ENCODE measurements at regions of chr10 and their contacts with region 1.

Region 1: GRCh38 chr10:63689768-63690167 is 168.6 kb downstream of the REEP3 start:
- DNase-seq: no peak
- H3K4me3 ChIP-seq: no peak overlapping the region
- H3K27ac ChIP-seq: peak overlapping the region; percentile 70
- H3K4me1 ChIP-seq: peaks cover 15% of the 10 kb centered on the region
- H3K27me3 ChIP-seq: no peaks in the 10 kb centered on the region
- CTCF ChIP-seq: no peak

Region 2: DNA sequence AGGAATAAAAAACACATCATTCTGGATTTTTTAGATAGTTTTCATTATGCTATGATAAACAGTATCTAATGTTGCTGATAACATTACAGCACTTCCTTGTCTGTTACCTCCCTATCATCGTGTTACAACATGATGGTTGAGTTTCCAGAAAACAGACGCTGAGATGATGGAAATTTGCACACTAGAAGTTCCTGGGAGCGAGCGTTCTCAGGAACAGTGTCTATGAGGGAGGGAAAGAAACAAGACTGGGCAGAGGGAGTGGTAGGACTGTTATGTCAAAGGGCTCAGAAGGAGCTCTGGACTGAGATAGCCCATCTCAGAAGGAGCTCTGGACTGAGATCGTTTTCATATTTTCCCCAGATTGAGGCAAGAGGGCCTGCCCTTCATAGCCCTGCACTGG is 47.0 kb before region 1 on chr10:
- CTCF ChIA-PET with region 1: no interaction called
- POLR2A ChIA-PET with region 1: no interaction called
- intact Hi-C with region 1: loop called (anchors 1 kb)
- DNase-seq: no peak
- H3K4me3 ChIP-seq: no peak overlapping the region
- H3K27ac ChIP-seq: peak overlapping the region; percentile 63
- H3K4me1 ChIP-seq: peaks cover 25% of the 10 kb centered on the region
- H3K27me3 ChIP-seq: no peaks in the 10 kb centered on the region
- CTCF ChIP-seq: no peak